ENCODE measurements at regions of chr13 and their contacts with region 1.

Region 1: DNA sequence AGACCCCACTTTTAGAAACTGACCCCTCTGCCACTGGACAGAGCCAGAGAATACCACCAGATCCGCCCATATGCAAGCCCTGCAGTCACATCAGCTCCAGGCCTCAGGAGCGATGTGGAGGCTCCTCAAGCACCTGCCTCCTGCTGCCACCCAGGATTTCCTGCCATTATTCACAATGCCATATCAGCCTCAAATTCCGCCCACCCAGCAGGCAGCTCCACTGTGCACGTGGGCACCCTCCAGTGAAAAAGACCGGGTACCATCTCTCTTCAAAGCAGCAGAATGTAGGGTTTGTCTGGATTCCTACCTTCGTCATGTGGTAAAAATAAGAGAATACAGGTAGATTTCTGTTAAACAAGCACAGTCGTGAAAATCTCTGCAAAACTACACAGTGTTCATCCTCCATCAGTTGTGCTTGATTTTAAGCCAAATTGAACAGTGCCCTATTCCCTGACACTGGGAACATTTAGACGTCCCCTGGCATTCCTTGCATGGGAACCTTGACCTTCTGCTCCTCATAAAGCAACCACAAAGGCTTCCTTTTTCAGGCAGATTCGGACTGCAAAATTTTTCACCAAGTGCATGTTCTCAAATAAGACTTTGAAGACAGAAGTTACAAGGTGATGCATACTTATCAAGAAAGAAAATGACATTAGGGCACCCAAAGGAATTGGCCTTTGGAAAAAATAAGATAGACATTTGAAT is 56.4 kb downstream of the FAM124A start:
- DNase-seq: no peak
- ATAC-seq: no peak

Region 2: DNA sequence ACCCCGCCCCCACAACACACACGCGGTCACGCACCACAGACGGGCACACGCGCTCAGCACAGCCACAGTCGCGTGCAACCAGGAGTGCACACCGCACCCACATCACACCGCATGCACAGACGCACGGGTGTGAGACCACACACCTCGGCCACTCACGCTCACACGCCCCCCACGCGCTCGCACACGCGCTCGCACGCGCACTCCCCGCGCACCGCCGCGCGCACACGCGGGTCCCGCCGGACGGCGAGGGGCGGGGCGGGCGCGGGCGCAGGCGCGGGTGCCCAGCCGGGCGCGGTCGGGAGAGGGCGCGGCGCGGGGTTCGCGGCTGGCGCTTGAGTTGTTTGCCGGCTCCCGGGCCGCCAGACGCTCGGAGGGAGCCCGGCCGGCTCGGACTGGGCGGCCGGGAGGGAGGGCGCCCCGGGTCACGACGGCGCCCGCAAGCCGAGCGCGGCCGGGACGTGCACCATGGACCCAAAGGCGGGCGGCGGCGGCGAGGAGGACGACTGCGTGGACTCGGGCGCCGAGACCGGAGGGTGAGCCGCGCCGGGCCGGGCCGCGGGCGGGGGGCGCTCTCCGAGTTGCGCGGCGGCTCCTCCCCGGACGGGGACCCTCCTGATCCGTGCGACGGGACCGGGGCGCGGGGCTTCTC is 56.4 kb before region 1 on chr13 and contains the start of gene FAM124A:
- intact Hi-C with region 1: loop called in 1 of 2 experiments (anchors 2 kb)
- DNase-seq: peak; percentile 67
- ATAC-seq: peak; percentile 86 to 93
- total RNA-seq, gene FAM124A: 5.9 to 10.0 TPM